K562 (cell line): ENCODE measurements at regions of chr14 and their contacts with region 1.

Region 1: DNA sequence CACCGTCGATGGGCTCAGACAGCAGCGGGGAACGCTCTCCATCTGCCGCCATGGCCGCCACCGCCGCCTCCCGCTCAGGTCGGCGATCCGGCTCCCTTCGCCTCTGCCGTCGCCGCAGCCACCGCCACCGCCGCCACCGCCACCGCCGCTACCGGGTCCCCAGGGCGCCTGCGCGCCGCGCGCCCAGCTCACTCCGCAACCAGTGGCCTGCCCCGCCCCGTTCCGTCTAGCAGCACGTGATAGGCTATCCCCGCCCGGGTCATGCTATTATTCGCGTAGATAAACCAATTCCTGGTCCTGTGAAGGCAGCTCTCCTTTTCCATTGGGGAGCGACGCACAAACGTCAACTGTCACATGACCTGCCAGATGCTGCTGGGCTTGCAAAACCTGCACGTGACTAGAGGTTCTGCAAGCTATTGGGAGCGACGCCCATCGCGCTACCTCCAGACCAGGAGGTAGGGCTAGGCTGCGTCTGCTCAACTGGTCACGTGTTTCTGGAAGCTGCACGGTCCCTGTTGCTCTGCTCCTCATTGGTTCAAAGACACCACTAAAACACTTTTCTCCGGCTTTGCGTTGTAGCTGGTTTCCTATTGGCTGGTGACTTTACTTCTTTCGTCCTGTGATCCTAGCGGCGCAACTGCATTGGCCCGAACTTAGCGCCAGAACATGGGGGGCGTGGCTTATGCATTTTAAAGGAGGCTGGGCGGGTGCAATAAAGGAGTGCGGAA is at the start of gene PIP4P1:
- DNase-seq: peak; percentile 79 to 97 (median 85)
- ATAC-seq: peak; percentile 93
- H3K4me3 ChIP-seq: peak within 1 kb of the TSS; percentile 76
- H3K27ac ChIP-seq: peak within 1 kb of the TSS; percentile 96
- H3K4me1 ChIP-seq: peaks cover 26 to 33% of the 10 kb centered on the region in 2 experiments
- H3K27me3 ChIP-seq: no peaks in the 10 kb centered on the region
- CTCF ChIP-seq: no peak
- EP300 ChIP-seq: peak; percentile 35
- POLR2A ChIP-seq: no peak
- RAD21 ChIP-seq: no peak; a peak in 1 of 4 replicates
- polyA plus RNA-seq, gene PIP4P1: 5.3 to 7.4 TPM

Region 2: DNA sequence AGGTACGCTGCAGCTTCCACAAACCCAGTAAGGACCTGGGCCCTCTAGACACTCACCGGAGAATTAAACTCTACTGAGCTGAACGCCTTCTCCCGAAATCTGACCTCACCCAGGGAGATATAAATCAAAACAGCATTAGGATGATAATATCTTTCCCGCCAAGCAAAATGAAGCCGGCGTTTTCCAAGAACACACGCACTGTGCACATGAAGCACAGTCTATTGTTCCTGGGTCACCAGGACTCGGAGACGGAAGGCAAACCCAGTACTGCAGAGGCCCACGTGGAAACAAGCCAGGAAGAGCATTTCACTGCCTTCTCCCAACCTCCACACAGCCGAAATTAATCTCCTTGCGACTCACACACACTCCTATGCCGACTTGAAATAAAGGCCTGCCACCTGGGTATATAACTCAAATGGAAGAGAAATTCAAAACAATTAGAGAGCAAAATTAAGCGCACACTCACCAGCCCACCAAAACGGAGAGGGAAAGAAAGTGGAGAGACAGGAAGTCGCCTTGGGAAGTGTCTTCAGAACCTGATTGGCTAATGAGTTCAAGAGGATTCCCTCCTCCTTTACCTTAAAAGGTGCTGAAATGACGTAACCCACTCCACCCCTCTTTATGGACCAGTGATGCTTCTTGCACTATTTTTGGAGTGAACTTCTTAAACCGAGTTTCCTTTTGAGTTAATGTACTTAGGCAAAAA is 128.5 kb before region 1 on chr14 and contains the start of gene CCNB1IP1:
- CTCF ChIA-PET with region 1: no interaction called
- POLR2A ChIA-PET with region 1: interaction called, 3 read pairs
- in situ Hi-C with region 1: no loop called
- intact Hi-C with region 1: loop called (anchors 1 kb)
- DNase-seq: peak; percentile 70 to 91 (median 82)
- ATAC-seq: peak; percentile 91
- H3K4me3 ChIP-seq: peak within 1 kb of the TSS; percentile 87
- H3K27ac ChIP-seq: peak within 1 kb of the TSS; percentile 90
- H3K4me1 ChIP-seq: peaks cover 0 to 11% of the 10 kb centered on the region in 2 experiments; a peak in 2 of 5 replicates
- H3K27me3 ChIP-seq: no peaks in the 10 kb centered on the region
- CTCF ChIP-seq: no peak
- EP300 ChIP-seq: no peak
- POLR2A ChIP-seq: peak; percentile 94
- RAD21 ChIP-seq: no peak
- polyA plus RNA-seq, gene CCNB1IP1: 80.7 to 81.0 TPM

Region 3: DNA sequence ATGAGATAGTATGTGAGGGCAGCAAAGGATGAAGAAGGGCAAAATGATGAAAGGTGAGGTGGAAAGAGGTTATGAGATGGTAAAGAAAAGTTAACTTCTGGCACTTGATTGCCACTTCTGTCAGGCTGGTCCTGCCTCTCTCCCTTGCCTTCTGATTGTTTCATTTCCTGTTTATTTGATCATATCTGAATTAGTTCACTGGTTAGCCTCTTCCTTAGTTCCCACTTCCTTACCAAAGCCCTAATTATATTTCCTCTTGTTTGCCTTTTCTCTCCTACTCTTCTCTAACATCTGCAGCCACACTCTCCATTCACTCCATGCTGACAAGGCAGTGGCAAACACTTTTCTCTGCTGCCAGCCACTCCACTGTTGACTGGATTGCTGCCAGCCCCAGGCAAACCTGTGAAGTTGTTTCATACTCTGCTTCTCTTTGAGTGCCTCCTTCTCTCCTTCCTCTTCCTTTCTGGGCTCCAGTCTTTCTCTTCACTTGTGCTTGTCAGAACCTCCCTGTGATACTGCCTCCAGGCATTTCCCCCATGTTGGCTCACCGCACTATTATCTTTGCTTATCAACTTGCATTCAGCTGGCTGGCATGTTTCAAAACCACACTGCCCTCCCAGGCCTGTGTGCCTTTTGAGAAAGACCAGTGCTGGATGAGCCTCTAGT is 15.9 kb after region 1 on chr14:
- CTCF ChIA-PET with region 1: no interaction called
- POLR2A ChIA-PET with region 1: interaction called, 36 read pairs
- in situ Hi-C with region 1: no loop called
- intact Hi-C with region 1: no loop called
- DNase-seq: peak in 2 of 4 experiments; percentile 51 to 76
- ATAC-seq: peak; percentile 70
- H3K4me3 ChIP-seq: no peak overlapping the region
- H3K27ac ChIP-seq: peak overlapping the region; percentile 26; the same call in 2 of the 3 replicates
- H3K4me1 ChIP-seq: peaks cover 13 to 41% of the 10 kb centered on the region in 2 experiments; a peak in 4 of 5 replicates
- H3K27me3 ChIP-seq: no peaks in the 10 kb centered on the region
- CTCF ChIP-seq: no peak
- EP300 ChIP-seq: peak; percentile 42; the same call in 1 of the 2 replicates
- POLR2A ChIP-seq: no peak
- RAD21 ChIP-seq: peak in 1 of 2 experiments; percentile 23; a peak in 1 of 4 replicates

Region 4: DNA sequence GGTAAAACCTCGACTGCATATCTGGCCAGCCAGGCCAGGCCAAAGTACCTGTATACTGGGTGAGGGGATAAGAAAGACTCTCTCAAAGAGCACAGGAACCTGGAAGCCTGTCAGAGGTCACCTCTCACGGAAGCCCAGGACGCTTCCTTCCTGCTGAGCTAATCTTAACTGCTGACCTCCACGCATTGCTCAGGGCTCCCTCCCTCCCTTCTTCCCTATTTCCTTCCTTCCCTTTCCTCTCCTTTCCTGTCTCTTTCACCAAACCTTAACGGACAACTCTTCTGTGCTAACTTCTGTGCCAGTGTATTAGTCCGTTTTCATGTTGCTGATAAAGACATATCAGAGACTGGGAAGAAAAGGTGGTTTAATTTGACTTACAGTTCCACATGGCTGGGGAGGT is 29.1 kb after region 1 on chr14:
- CTCF ChIA-PET with region 1: no interaction called
- POLR2A ChIA-PET with region 1: no interaction called
- in situ Hi-C with region 1: no loop called
- intact Hi-C with region 1: loop called (anchors 2 kb)
- DNase-seq: peak in 2 of 4 experiments; percentile 22 to 62
- ATAC-seq: peak; percentile 80
- H3K4me3 ChIP-seq: no peak overlapping the region
- H3K27ac ChIP-seq: peak overlapping the region; percentile 74
- H3K4me1 ChIP-seq: peaks cover 14 to 38% of the 10 kb centered on the region in 2 experiments; a peak in 3 of 5 replicates
- H3K27me3 ChIP-seq: no peaks in the 10 kb centered on the region
- CTCF ChIP-seq: no peak
- EP300 ChIP-seq: no peak
- POLR2A ChIP-seq: no peak
- RAD21 ChIP-seq: no peak